Caco-2 (cell line): ENCODE measurements at regions of chr2 and their contacts with region 1.

Region 1: GRCh38 chr2:201414099-201415023 is 36.9 kb downstream of the TRAK2 start:
- DNase-seq: no peak
- H3K4me3 ChIP-seq: no peak overlapping the region
- H3K4me3 Mint-ChIP-seq: no peak overlapping the region
- H3K27ac Mint-ChIP-seq: no peak overlapping the region
- H3K4me1 ChIP-seq: peaks cover 8% of the 10 kb centered on the region
- H3K4me1 Mint-ChIP-seq: no peaks in the 10 kb centered on the region
- H3K27me3 ChIP-seq: no peaks in the 10 kb centered on the region
- H3K27me3 Mint-ChIP-seq: no peaks in the 10 kb centered on the region
- CTCF ChIP-seq: no peak

Region 2: GRCh38 chr2:201425952-201426351 is 11.6 kb after region 1 on chr2:
- CTCF ChIA-PET with region 1: no interaction called
- POLR2A ChIA-PET with region 1: no interaction called
- intact Hi-C with region 1: no loop called
- DNase-seq: no peak
- H3K4me3 ChIP-seq: no peak overlapping the region
- H3K4me3 Mint-ChIP-seq: no peak overlapping the region
- H3K27ac Mint-ChIP-seq: no peak overlapping the region
- H3K4me1 ChIP-seq: no peaks in the 10 kb centered on the region; the same call in 1 of the 2 replicates
- H3K4me1 Mint-ChIP-seq: no peaks in the 10 kb centered on the region
- H3K27me3 ChIP-seq: no peaks in the 10 kb centered on the region
- H3K27me3 Mint-ChIP-seq: no peaks in the 10 kb centered on the region
- CTCF ChIP-seq: no peak

Region 3: GRCh38 chr2:201440182-201440581 is 25.8 kb after region 1 on chr2:
- CTCF ChIA-PET with region 1: no interaction called
- POLR2A ChIA-PET with region 1: no interaction called
- intact Hi-C with region 1: no loop called
- DNase-seq: peak; percentile 79
- H3K4me3 ChIP-seq: no peak overlapping the region
- H3K4me3 Mint-ChIP-seq: peak overlapping the region; percentile 56
- H3K27ac Mint-ChIP-seq: peak overlapping the region; percentile 68
- H3K4me1 ChIP-seq: peaks cover 20% of the 10 kb centered on the region
- H3K4me1 Mint-ChIP-seq: peaks cover 16% of the 10 kb centered on the region
- H3K27me3 ChIP-seq: no peaks in the 10 kb centered on the region
- H3K27me3 Mint-ChIP-seq: no peaks in the 10 kb centered on the region
- CTCF ChIP-seq: no peak

Region 4: GRCh38 chr2:201451292-201452057 is 37.1 kb after region 1 on chr2 and contains the starts of genes STRADB and TRAK2:
- CTCF ChIA-PET with region 1: no interaction called
- POLR2A ChIA-PET with region 1: no interaction called
- intact Hi-C with region 1: no loop called
- DNase-seq: peak; percentile 98
- H3K4me3 ChIP-seq: peak within 1 kb of the TSS; percentile 86
- H3K4me3 Mint-ChIP-seq: peak within 1 kb of the TSS; percentile 94
- H3K27ac Mint-ChIP-seq: peak within 1 kb of the TSS; percentile 94
- H3K4me1 ChIP-seq: peaks cover 23% of the 10 kb centered on the region
- H3K4me1 Mint-ChIP-seq: peaks cover 15% of the 10 kb centered on the region
- H3K27me3 ChIP-seq: no peaks in the 10 kb centered on the region
- H3K27me3 Mint-ChIP-seq: no peaks in the 10 kb centered on the region
- CTCF ChIP-seq: peak in 1 of 2 experiments; percentile 13
- total RNA-seq, gene STRADB: 41.2 and 49.0 TPM in 2 replicates
- total RNA-seq, gene TRAK2: 21.9 and 23.2 TPM in 2 replicates

Region 5: GRCh38 chr2:201642579-201643215 is 228.3 kb after region 1 on chr2:
- CTCF ChIA-PET with region 1: no interaction called
- POLR2A ChIA-PET with region 1: no interaction called
- intact Hi-C with region 1: loop called (anchors 10 kb)
- DNase-seq: peak; percentile 85 to 94
- H3K4me3 ChIP-seq: peak overlapping the region; percentile 64
- H3K4me3 Mint-ChIP-seq: peak overlapping the region; percentile 92
- H3K27ac Mint-ChIP-seq: peak overlapping the region; percentile 97
- H3K4me1 ChIP-seq: no peaks in the 10 kb centered on the region
- H3K4me1 Mint-ChIP-seq: peaks cover 18% of the 10 kb centered on the region
- H3K27me3 ChIP-seq: no peaks in the 10 kb centered on the region
- H3K27me3 Mint-ChIP-seq: no peaks in the 10 kb centered on the region
- CTCF ChIP-seq: no peak

Region 6: GRCh38 chr2:201680743-201681142 is 266.4 kb after region 1 on chr2:
- CTCF ChIA-PET with region 1: no interaction called
- POLR2A ChIA-PET with region 1: no interaction called
- intact Hi-C with region 1: no loop called
- DNase-seq: peak; percentile 56 to 61
- H3K4me3 ChIP-seq: no peak overlapping the region
- H3K4me3 Mint-ChIP-seq: no peak overlapping the region
- H3K27ac Mint-ChIP-seq: no peak overlapping the region
- H3K4me1 ChIP-seq: no peaks in the 10 kb centered on the region
- H3K4me1 Mint-ChIP-seq: no peaks in the 10 kb centered on the region
- H3K27me3 ChIP-seq: no peaks in the 10 kb centered on the region
- H3K27me3 Mint-ChIP-seq: peaks cover 3% of the 10 kb centered on the region
- CTCF ChIP-seq: peak; percentile 54 to 66

Region 7: DNA sequence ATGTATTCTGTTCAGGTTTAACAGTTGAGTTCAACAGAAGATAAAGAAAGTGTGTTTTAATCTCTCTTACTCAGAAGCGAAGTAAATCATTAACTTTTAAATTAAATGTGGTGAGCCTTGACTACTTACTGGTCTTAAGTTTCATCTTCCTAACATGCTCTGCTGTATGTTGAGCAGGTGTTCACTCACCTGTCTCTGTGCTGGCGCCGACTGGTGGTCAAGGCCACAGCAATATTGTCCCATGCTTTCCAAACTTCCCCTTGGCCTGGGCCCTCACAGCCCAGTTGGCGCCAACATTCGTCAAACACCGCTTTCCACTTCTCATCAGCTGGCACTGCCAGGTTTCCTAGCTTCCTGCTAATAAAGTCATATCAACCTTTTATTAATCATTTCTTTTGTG is 301.1 kb after region 1 on chr2:
- CTCF ChIA-PET with region 1: no interaction called
- POLR2A ChIA-PET with region 1: no interaction called
- intact Hi-C with region 1: loop called (anchors 10 kb)
- DNase-seq: peak; percentile 64 to 66
- H3K4me3 ChIP-seq: no peak overlapping the region
- H3K4me3 Mint-ChIP-seq: no peak overlapping the region
- H3K27ac Mint-ChIP-seq: no peak overlapping the region
- H3K4me1 ChIP-seq: peaks cover 7% of the 10 kb centered on the region; the same call in 1 of the 2 replicates
- H3K4me1 Mint-ChIP-seq: peaks cover 8% of the 10 kb centered on the region
- H3K27me3 ChIP-seq: no peaks in the 10 kb centered on the region
- H3K27me3 Mint-ChIP-seq: no peaks in the 10 kb centered on the region
- CTCF ChIP-seq: peak; percentile 51 to 61